Left colon (tissue), 2 donors: ENCODE measurements at regions of chr2 and their contacts with region 1.

Region 1: DNA sequence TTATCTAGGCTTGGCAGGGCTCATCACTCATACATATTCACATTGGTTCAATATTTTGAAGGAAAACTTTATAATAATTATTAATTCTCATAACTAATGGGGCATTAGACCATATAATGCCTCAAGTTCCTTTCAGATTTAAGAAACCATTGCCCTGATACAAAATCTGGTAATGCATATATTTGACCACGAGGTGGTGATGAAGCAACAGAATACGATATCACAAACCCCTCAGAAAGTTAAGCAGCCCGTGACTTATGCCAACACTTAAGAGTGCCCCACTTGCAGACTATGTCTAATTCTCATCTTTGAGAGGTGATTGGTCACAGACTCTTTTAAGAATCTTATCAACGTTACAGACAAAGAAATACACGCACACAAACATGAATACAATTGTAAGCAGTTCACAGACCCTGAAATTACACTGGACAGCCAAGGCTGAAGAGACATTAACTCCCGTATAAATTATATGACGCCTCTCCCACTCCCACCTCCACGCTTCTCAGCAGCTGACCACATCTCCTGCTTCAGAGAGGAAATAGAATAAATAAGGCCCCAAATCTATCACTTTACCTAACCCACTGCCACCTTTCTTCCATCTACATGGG is 20.7 kb upstream of the DNAH6 start:
- DNase-seq: no peak
- ATAC-seq: peak; percentile 69

Region 2: GRCh38 chr2:84631047-84631446 is 135.4 kb after region 1 on chr2:
- intact Hi-C with region 1: loop called in 1 of 2 experiments (anchors 5 kb)
- DNase-seq: no peak
- ATAC-seq: peak; percentile 86

Region 3: DNA sequence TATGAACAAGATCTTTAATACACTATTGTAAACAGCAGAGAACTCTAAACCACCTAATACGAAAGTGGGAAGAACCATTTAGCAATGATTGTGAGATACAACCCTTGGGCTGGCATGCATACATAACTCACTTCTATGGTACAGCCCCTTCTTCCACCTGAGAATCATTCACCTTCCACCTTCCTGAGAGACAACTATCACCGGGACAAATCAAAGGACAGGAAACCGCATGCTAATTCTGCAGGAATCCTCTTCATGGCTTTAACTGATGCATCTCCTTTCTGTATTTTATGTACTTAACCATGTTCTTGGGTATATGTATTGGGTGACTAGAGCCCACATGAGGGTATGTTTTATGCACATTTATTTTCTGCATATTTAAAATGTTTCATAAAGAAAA is 262.0 kb after region 1 on chr2:
- intact Hi-C with region 1: no loop called
- DNase-seq: no peak
- ATAC-seq: no peak

Region 4: GRCh38 chr2:84881581-84882414 is 386.2 kb after region 1 on chr2:
- intact Hi-C with region 1: loop called in 1 of 2 experiments (anchors 2 kb)
- DNase-seq: peak; percentile 85 to 92
- ATAC-seq: peak; percentile 58

Region 5: DNA sequence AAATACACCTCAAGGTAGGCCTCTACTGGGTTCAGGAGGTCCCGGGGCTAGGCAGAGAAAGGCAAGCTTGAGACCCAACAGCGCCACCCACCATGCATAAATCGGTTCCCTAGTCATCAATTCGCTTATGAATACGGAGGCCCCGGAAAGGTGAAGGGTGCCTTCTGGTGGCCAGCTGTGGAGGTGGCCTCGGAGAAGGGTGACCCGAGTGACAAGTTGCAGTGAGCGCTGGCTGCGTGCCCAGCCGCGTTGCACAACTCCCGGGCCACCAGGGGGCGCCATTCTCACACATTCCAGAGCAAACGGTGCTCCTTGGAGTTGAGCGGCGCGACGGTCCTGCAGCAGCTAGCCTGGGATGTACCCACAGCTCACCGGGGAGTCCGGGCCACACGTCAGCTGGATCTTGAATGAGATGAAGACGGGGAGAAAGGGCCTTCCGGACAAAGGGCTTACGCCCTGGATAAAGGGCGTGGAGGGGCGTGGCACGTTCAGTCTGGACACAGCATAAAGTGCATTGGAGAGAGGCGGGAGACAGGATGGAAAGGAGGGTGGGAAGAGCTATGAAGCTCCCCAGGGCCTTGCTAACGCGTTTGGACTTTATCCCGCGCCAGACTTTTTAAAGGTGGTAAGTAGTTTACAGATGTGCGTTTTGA is 430.2 kb after region 1 on chr2:
- intact Hi-C with region 1: loop called in 1 of 2 experiments (anchors 5 kb)
- DNase-seq: peak; percentile 95 to 99
- ATAC-seq: peak; percentile 80